Heart left ventricle (tissue), 16 donors: ENCODE measurements at regions of chrX and their contacts with region 1.

Region 1: GRCh38 chrX:53224860-53225797 is at the start of gene KDM5C:
- DNase-seq: peak; percentile 88 to 97 (median 92)
- ATAC-seq: peak; percentile 83 to 93 (median 91)
- H3K4me3 ChIP-seq: peak within 1 kb of the TSS; percentile 77 to 99 (median 92)
- H3K27ac ChIP-seq: peak within 1 kb of the TSS; percentile 78 to 97 (median 90)
- H3K4me1 ChIP-seq: peaks cover 0 to 43% (median 24%) of the 10 kb centered on the region in 12 donors
- H3K27me3 ChIP-seq: peaks cover 0 to 5% (median 0%) of the 10 kb centered on the region in 9 donors
- CTCF ChIP-seq: no peak
- POLR2A ChIP-seq: peak in 1 of 2 donors; percentile 38
- total RNA-seq, gene KDM5C: 32.3 to 67.2 (median 43.6) TPM

Region 2: GRCh38 chrX:53081925-53082772 is 143.0 kb before region 1 on chrX and contains the start of gene TSPYL2:
- intact Hi-C with region 1: loop called in 1 of 10 experiments (anchors 10 kb)
- DNase-seq: peak; percentile 94 to 96 (median 95)
- ATAC-seq: peak; percentile 93 to 96 (median 94)
- H3K4me3 ChIP-seq: peak within 1 kb of the TSS; percentile 41 to 98 (median 81)
- H3K27ac ChIP-seq: peak within 1 kb of the TSS; percentile 73 to 94 (median 86)
- H3K4me1 ChIP-seq: peaks cover 0 to 26% (median 1%) of the 10 kb centered on the region in 12 donors
- H3K27me3 ChIP-seq: peaks cover 0 to 5% (median 0%) of the 10 kb centered on the region in 9 donors
- CTCF ChIP-seq: no peak
- POLR2A ChIP-seq: peak; percentile 97 to 99
- total RNA-seq, gene TSPYL2: 17.7 to 72.0 (median 26.2) TPM

Region 3: DNA sequence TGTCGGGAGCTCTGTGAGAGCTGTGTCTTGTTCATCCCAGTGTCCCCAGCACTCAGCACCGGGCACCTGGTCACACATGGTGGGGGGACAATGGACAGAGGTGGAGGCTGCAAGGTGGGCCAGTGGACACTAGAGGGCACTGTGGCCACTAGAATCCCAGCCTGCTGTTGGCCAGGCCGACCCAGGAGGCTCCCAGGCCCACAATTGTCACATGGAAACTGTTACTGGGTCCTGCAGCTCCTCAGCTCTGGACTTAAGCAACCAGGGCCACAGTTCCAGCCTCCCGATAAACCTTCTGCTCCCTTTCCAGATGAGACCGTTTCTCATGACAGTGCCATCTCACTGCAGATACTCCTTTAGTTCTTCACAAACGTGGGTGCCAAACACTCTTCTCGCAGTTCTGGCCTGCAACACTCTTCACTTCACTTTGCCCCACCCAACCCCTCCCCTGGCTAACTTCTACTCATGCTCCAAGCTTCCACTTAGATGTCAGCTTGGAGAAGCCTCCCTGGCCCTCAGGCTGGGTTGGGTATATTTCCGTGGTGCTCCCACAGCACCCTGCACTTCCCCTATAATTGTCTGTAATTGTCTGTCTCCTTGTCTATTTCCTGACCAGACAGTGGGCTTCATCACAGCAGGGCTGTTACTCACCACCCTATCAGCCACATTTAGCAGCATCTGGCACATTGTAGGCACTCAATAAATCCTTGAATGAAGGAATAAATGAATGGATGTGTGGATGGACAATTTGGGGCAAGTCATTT is 59.7 kb after region 1 on chrX:
- intact Hi-C with region 1: loop called in 2 of 10 experiments (anchors 10 kb)
- DNase-seq: peak; percentile 34 to 74 (median 62)
- ATAC-seq: peak in 3 of 4 donors; percentile 41 to 48 (median 42)
- H3K4me3 ChIP-seq: no peak overlapping the region
- H3K27ac ChIP-seq: peak overlapping the region in 3 of 12 donors; percentile 8 to 16 (median 13)
- H3K4me1 ChIP-seq: peaks cover 0 to 61% (median 22%) of the 10 kb centered on the region in 12 donors
- H3K27me3 ChIP-seq: peaks cover 0 to 35% (median 0%) of the 10 kb centered on the region in 9 donors
- CTCF ChIP-seq: peak; percentile 62 to 91 (median 72)
- POLR2A ChIP-seq: no peak

Region 4: DNA sequence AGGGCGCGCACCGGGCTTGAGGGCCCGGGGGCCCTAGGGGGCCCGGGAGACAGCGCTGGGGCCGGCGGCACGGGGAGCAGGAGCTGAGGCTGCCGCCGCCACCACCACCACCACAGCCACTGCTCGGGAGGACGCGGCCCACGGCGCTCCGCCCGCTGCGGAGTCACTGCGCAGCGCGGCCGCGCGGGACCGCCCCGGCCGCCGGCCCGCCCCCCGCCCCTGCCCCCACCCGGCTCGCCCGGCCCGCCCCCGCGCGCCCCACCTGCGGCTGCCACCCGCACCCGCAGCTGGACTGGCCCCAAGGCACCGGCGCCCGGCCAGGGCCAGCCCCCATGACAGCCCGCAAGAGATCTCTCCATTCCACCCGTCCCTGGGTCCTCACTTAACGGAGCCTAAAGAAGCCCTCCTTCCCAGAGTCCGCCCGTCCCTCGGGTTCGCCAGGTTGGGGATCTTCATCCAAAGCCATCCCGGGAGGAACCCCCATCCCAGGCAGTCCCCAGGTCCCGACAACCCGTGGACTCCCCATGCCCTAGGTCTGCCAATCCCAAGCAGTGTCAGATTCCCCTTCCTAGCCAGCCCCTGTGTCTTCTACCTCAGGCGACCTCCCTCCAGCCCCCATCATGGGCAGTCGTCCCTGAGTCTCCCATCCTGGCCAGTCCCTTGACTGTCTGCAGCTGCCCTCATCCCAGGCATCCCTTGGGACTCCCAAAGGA is 96.3 kb after region 1 on chrX:
- intact Hi-C with region 1: no loop called
- DNase-seq: peak in 1 of 5 donors; percentile 19
- ATAC-seq: peak in 3 of 4 donors; percentile 46 to 70 (median 59)
- H3K4me3 ChIP-seq: peak overlapping the region; percentile 31 to 70 (median 60)
- H3K27ac ChIP-seq: no peak overlapping the region
- H3K4me1 ChIP-seq: peaks cover 0 to 22% (median 0%) of the 10 kb centered on the region in 12 donors
- H3K27me3 ChIP-seq: peaks cover 0 to 90% (median 0%) of the 10 kb centered on the region in 9 donors
- CTCF ChIP-seq: no peak
- POLR2A ChIP-seq: peak in 1 of 2 donors; percentile 34